ENCODE measurements at regions of chr11 and their contacts with region 1.

Region 1: DNA sequence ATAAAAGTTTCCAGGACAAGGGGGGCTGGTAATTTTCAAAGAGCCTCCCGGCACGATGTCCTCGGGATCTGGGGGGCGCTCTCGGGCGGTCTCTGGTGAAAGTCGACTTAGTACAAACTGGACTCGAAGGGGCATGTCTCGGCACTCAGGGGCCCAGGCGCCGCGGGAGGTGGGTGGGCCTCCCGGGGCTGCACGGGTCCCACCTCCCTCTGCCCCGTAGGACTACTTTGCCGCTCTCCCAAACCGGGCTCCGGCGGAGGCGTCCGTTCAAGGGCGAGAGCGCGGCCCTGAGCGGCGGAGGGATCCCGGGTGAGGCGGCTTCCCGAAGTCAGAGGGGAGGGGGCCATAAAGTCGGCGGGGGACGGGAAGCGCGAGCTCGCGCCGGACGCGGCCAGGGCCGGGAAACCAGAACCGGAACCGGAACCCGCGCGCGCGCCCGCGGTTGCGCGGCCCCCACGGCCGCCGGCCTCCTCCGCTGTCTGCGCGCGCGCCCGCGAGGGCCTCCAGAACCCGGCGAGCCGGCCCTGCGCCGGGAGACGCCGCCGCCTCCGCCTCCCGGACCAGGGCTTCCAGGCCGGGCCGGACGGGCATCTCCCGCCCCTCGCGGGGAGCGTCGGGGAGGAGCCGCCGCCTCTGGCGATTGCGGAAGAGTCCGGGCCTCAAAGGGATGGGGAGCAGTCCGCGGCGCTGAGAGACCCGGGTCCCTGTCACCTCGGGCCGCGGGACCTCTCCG is at the start of gene ARHGEF12:
- DNase-seq: peak; percentile 94 to 95
- ATAC-seq: peak; percentile 71 to 73
- H3K4me3 ChIP-seq: peak within 1 kb of the TSS; percentile 81 to 96 (median 90)
- H3K27ac ChIP-seq: peak within 1 kb of the TSS; percentile 97 to 99 (median 98)
- H3K4me1 ChIP-seq: peaks cover 32 to 42% of the 10 kb centered on the region in 2 donors
- H3K27me3 ChIP-seq: no peaks in the 10 kb centered on the region
- CTCF ChIP-seq: peak in 2 of 5 experiments; percentile 8 to 40
- POLR2A ChIP-seq: peak; percentile 95 to 97
- total RNA-seq, gene ARHGEF12: 52.9 to 77.3 (median 61.4) TPM

Region 2: DNA sequence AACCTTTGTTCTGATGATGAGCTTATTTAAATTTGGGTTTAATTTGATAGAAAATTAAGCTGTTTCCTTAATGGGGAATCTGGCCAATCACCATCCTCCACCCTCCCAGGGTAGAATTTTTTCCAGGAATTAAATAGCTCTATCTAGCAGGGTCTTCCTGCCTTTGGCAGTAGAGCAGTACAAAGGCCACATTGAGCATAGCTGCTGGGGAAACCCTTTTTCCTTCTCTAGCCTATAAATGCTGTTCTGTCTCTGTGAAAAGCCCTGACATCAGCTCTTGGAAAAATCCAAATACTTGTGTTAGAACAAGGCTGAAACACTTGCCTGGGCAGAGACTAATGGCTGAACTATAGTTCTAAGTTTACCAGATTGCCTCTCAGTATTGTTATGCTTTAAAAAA is 55.2 kb after region 1 on chr11:
- in situ Hi-C with region 1: no loop called
- intact Hi-C with region 1: loop called (anchors 2 kb)
- DNase-seq: no peak
- ATAC-seq: peak in 1 of 2 donors; percentile 28
- H3K4me3 ChIP-seq: no peak overlapping the region
- H3K27ac ChIP-seq: peak overlapping the region; percentile 74 to 79 (median 77)
- H3K4me1 ChIP-seq: peaks cover 59 to 62% of the 10 kb centered on the region in 2 donors
- H3K27me3 ChIP-seq: no peaks in the 10 kb centered on the region
- CTCF ChIP-seq: no peak
- POLR2A ChIP-seq: no peak

Region 3: DNA sequence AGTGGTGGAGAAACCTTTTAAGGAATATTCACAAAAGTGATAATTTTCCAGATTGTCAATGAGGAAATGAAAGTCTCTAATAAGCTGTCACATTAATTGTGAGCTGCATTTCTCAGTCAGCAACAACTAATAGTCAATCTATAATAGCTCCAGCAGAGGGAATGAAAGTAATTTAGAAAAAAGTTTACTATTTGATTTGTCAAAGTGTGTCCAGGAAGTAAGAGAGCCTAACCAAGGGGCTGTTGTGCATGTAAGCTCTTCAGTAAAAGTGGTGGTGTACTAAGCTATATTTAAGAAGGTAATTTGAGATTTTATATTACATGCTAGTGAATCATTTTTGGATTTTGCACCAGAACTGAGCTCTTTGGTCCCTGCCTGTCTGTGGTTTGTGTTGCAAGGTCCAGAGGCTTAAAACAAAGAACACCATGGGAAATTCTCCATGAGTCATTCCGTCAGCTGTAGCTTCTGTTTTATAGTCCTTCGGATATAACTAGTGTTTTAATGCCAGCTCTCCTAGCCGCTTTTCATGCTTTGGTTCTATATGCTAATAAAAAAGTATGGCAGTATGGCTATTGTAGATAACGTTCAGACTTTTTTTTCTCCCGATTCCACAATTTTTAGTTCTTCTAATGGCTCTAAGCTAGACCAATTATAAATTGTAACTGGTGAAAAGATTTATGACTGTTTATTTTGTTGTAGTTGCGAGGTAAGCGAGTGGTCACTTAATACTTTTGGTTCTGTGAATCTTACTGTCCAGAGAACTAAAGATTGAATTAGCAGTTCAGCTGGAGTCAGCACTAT is 64.7 kb after region 1 on chr11:
- in situ Hi-C with region 1: no loop called
- intact Hi-C with region 1: loop called (anchors 2 kb)
- DNase-seq: peak; percentile 64 to 70
- ATAC-seq: peak; percentile 98 to 99
- H3K4me3 ChIP-seq: peak overlapping the region; percentile 35 to 51 (median 40)
- H3K27ac ChIP-seq: peak overlapping the region; percentile 83 to 85 (median 84)
- H3K4me1 ChIP-seq: peaks cover 68 to 86% of the 10 kb centered on the region in 2 donors
- H3K27me3 ChIP-seq: no peaks in the 10 kb centered on the region
- CTCF ChIP-seq: no peak
- POLR2A ChIP-seq: peak; percentile 19 to 41

Region 4: GRCh38 chr11:120424970-120425332 is 88.9 kb after region 1 on chr11:
- in situ Hi-C with region 1: loop called (anchors 5 to 25 kb)
- intact Hi-C with region 1: no loop called
- DNase-seq: no peak
- ATAC-seq: no peak
- H3K4me3 ChIP-seq: no peak overlapping the region
- H3K27ac ChIP-seq: no peak overlapping the region
- H3K4me1 ChIP-seq: no peaks in the 10 kb centered on the region
- H3K27me3 ChIP-seq: no peaks in the 10 kb centered on the region
- CTCF ChIP-seq: no peak
- POLR2A ChIP-seq: no peak

Region 5: DNA sequence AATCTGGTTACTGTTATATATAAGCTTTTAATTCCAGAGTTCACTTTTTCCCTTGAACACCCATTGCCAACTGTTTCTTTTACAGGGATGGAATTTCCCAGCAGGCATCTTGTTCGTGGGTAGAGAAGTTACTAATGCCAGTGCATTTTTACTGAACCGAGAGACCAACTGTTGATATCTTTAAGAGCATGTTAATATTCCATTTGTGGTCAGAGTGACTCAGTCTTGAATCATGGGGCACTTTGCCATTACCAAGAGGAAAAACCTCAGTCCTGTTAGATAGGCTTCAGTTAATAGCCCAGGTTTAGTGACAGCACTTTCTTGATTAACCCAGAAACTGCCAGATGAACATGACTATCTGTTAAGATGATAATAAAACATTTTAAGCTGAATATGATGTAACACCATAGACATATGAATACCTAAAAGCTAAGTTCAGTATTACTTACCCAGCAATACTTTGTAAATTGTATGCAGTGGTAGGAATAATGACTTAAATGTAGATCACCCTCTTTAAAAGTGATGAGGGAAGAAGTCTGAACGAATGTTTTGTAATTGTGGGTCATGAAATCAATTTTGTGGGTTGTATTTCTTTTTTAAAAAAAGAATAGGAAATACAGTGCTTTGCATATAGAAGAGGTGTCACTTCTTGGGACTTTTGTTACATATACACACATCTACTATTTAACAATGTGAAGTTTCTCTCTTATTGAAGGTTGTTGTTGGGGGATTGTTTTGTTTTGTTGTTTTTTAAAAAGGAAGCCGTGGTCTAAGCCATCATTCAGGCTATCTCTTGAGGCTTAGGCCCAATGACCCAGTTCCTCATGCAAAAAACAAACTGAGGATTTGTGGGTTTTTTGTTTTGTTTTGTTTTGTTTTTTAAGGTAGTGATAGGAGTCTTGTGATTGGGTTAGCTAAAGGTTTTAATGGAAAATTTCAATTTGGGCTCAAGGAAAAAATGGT is 96.3 kb after region 1 on chr11:
- in situ Hi-C with region 1: loop called (anchors 5 to 25 kb)
- intact Hi-C with region 1: loop called (anchors 1 kb)
- DNase-seq: peak; percentile 48 to 55
- ATAC-seq: peak; percentile 98 to 99
- H3K4me3 ChIP-seq: no peak overlapping the region
- H3K27ac ChIP-seq: peak overlapping the region; percentile 77 to 81 (median 79)
- H3K4me1 ChIP-seq: peaks cover 15 to 17% of the 10 kb centered on the region in 2 donors
- H3K27me3 ChIP-seq: no peaks in the 10 kb centered on the region
- CTCF ChIP-seq: no peak
- POLR2A ChIP-seq: no peak

Region 6: DNA sequence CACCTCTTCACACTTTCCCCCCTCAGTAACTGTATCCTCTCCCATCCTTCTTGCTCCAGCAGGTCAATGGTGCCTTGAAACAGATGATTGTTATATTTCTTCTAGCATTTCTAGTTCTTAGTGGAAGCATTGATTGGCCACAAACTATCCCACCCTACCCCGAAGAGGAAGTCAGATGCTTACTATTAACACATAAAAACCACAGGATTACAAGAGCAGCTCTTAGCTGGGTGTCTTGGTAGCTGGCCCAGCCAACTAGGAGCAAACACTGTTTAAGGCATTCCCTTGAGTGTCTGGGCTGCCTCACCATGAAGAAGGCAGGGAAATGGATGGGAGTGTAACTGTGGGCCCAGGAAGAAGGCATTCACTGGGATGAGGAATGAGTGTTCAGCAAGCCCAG is 352.1 kb after region 1 on chr11:
- in situ Hi-C with region 1: no loop called
- intact Hi-C with region 1: loop called (anchors 5 kb)
- DNase-seq: no peak
- ATAC-seq: no peak
- H3K4me3 ChIP-seq: no peak overlapping the region
- H3K27ac ChIP-seq: no peak overlapping the region
- H3K4me1 ChIP-seq: no peaks in the 10 kb centered on the region
- H3K27me3 ChIP-seq: no peaks in the 10 kb centered on the region
- CTCF ChIP-seq: no peak
- POLR2A ChIP-seq: no peak